GM12878 (cell line): ENCODE measurements at regions of chr2 and their contacts with region 1.

Region 1: GRCh38 chr2:182715896-182716668 is at the start of gene DNAJC10:
- DNase-seq: peak; percentile 56
- ATAC-seq: peak; percentile 91
- H3K4me3 ChIP-seq: peak within 1 kb of the TSS; percentile 93
- H3K27ac ChIP-seq: peak within 1 kb of the TSS; percentile 73
- H3K4me1 ChIP-seq: peaks cover 5% of the 10 kb centered on the region; the same call in 1 of the 2 replicates
- H3K27me3 ChIP-seq: no peaks in the 10 kb centered on the region
- CTCF ChIP-seq: no peak
- EP300 ChIP-seq: peak in 1 of 2 experiments; percentile 36; a peak in 1 of 4 replicates
- POLR2A ChIP-seq: peak; percentile 97
- RAD21 ChIP-seq: no peak
- polyA plus RNA-seq, gene DNAJC10: 9.1 to 11.5 TPM

Region 2: DNA sequence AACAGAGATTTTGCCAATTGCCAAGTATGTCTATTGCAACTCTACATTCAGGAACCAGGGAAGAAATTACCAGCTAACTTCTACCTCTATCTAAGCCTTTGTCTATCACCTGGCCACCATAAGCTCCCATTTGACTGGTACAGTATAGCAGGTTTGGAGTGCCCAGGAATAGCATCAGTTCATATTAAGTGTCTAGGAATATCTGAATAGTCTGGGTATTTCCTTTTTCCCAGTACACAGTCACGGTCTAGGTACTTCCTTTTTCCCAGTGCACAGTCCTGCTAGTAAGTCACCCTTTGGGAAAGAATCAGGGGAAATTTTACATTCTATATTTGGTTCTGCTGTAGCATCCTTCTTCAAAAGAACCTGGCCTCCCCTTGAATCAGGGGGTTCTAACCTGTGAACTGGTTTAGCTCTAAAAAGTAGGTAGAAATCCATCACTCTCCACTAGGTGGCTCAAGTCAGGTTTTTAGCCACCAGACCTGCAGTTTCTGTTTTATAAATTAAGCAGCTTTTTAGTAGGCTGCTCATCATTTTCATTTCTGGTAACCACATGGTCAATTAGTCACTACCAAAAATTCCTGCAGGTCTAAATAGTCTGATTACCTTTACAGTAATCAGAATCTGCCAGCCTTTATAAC is 49.3 kb before region 1 on chr2:
- CTCF ChIA-PET with region 1: interaction called, 10 read pairs
- POLR2A ChIA-PET with region 1: no interaction called
- RAD21 ChIA-PET with region 1: interaction called, 4 read pairs
- SMC1A ChIA-PET with region 1: interaction called, 10 read pairs
- in situ Hi-C with region 1: no loop called
- intact Hi-C with region 1: no loop called
- DNase-seq: no peak
- ATAC-seq: peak; percentile 89
- H3K4me3 ChIP-seq: no peak overlapping the region
- H3K27ac ChIP-seq: no peak overlapping the region
- H3K4me1 ChIP-seq: no peaks in the 10 kb centered on the region
- H3K27me3 ChIP-seq: peaks cover 0 to 1% of the 10 kb centered on the region in 2 experiments; a peak in 2 of 4 replicates
- CTCF ChIP-seq: peak; percentile 43 to 64 (median 55); a peak in 5 of 6 replicates
- EP300 ChIP-seq: no peak
- POLR2A ChIP-seq: no peak
- RAD21 ChIP-seq: peak; percentile 67

Region 3: DNA sequence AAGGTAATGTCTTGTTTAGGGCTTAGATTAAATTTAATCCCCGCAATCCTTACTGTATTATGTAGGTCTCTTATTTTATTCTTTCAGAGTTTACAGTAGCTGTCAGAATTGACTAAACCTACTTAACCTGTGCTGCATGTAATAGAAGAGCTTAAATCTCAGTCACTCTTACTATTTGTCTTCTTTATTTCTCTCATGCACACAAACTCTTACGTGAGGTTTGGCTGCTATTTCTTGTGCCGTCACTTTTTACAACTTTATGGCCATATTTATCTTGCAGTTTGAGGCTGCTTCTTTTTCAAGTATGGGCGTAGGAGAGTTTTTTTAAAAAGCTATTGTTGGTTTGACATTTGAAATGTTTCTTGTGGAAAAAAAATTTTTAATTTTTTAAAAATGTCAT is 11.9 kb after region 1 on chr2:
- CTCF ChIA-PET with region 1: interaction called, 5 read pairs
- POLR2A ChIA-PET with region 1: interaction called, 5 read pairs
- RAD21 ChIA-PET with region 1: no interaction called
- SMC1A ChIA-PET with region 1: interaction called, 37 read pairs
- in situ Hi-C with region 1: no loop called
- intact Hi-C with region 1: no loop called
- DNase-seq: no peak
- ATAC-seq: no peak
- H3K4me3 ChIP-seq: no peak overlapping the region
- H3K27ac ChIP-seq: no peak overlapping the region; the same call in 1 of the 2 replicates
- H3K4me1 ChIP-seq: peaks cover 3% of the 10 kb centered on the region; the same call in 1 of the 2 replicates
- H3K27me3 ChIP-seq: no peaks in the 10 kb centered on the region
- CTCF ChIP-seq: no peak
- EP300 ChIP-seq: no peak
- POLR2A ChIP-seq: no peak
- RAD21 ChIP-seq: no peak